ENCODE measurements at regions of chr12 and their contacts with region 1.

Region 1: DNA sequence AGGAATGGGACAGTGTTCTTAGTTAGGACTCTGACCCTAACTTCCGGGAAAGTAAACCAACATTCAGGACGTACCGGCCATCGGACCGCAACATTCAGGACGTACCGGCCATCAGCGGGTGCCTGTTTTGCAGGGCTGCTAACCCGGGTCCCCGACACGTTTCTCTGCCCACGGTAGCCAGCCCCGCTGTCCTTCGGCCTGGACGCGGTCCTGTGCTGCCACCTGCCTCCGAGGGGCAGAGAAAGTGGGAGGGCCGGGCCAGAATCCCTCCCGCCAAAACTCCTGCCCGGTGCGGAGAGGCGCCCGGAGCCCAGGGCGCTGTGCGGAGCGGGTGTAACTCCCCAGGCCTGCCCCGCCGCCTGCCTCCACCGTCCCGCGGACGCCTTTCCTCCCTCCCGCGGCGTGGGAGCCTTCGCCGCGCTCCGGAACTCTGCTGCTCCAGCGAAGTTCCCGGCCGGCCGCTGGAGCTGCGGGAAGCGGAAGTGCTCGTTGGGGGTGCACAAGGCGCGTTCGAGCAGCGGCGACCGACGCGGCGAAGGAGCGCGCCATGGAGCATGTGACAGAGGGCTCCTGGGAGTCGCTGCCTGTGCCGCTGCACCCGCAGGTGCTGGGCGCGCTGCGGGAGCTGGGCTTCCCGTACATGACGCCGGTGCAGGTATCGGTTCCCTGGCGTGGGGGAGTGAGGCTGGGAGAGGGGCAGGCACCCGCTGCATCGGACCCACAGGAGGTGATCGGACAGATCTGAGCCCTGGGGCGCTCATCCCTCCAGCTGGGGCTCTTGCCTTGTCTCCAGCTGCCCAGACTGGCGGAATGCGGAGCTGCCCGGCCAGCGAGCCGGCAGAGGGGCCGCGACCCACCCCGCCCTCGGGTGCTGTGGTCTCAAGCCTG is at the start of gene DDX55:
- DNase-seq: peak; percentile 77 to 87 (median 86)
- ATAC-seq: peak; percentile 96
- H3K4me3 ChIP-seq: peak within 1 kb of the TSS; percentile 99
- H3K4me3 Mint-ChIP-seq: peak within 1 kb of the TSS; percentile 89 to 99 (median 97)
- H3K27ac ChIP-seq: peak within 1 kb of the TSS; percentile 84
- H3K27ac Mint-ChIP-seq: peak within 1 kb of the TSS; percentile 83 to 98 (median 93)
- H3K4me1 ChIP-seq: peaks cover 4 to 8% of the 10 kb centered on the region in 2 donors
- H3K4me1 Mint-ChIP-seq: peaks cover 11 to 47% (median 30%) of the 10 kb centered on the region in 7 donors
- H3K27me3 ChIP-seq: no peaks in the 10 kb centered on the region
- H3K27me3 Mint-ChIP-seq: no peaks in the 10 kb centered on the region
- total RNA-seq, gene DDX55: 26.0 to 54.0 (median 43.4) TPM

Region 2: DNA sequence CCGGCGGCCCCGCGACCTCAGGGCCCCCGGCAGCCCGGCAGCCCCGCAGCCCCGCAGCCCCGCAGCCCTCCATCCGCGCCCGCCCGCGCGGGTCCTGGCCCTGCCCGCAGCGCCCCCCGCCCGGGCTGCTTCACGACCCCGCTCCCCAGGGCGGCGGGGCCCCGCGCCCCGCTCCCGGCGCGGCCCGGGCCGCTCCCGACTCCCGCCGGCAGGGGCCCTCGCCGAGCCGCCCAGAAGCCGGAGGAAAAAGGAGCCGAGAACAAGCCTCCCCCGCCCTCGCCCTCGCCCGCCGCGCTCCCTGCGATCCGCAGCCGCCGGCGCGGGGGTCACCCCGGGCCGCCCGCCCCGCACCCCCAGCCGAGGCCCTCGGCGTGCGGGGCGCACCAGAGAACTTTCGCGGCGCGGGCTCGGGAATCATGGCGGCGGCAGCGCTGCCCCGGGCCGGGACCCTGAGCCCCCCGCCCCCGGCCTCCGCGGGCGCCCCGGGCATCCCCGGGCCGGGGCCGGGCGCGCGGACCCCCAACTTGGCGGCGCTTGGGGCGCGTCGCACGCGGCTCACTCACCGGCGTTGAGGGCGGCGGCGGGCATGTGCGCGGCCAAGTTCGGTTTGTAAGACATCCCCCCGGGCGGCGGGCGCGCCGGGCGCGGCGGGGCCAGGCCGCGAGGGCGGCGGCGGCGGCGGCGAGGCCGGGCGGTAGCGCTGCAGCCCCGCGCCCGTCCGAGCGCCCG is 330.7 kb before region 1 on chr12:
- CTCF ChIA-PET with region 1: no interaction called
- POLR2A ChIA-PET with region 1: interaction called, 5 read pairs
- intact Hi-C with region 1: loop called (anchors 1 kb)
- DNase-seq: peak; percentile 55 to 84 (median 68)
- ATAC-seq: peak; percentile 88
- H3K4me3 ChIP-seq: no peak overlapping the region
- H3K4me3 Mint-ChIP-seq: peak overlapping the region in 1 of 10 donors; percentile 87
- H3K27ac ChIP-seq: no peak overlapping the region
- H3K27ac Mint-ChIP-seq: no peak overlapping the region
- H3K4me1 ChIP-seq: peaks cover 12 to 18% of the 10 kb centered on the region in 2 donors
- H3K4me1 Mint-ChIP-seq: peaks cover 7 to 30% (median 20%) of the 10 kb centered on the region in 7 donors
- H3K27me3 ChIP-seq: no peaks in the 10 kb centered on the region
- H3K27me3 Mint-ChIP-seq: no peaks in the 10 kb centered on the region

Region 3: GRCh38 chr12:123877968-123878367 is 276.1 kb after region 1 on chr12:
- CTCF ChIA-PET with region 1: no interaction called
- POLR2A ChIA-PET with region 1: no interaction called
- intact Hi-C with region 1: no loop called
- DNase-seq: no peak
- ATAC-seq: no peak
- H3K4me3 ChIP-seq: no peak overlapping the region
- H3K4me3 Mint-ChIP-seq: no peak overlapping the region
- H3K27ac ChIP-seq: no peak overlapping the region
- H3K27ac Mint-ChIP-seq: no peak overlapping the region
- H3K4me1 ChIP-seq: no peaks in the 10 kb centered on the region
- H3K4me1 Mint-ChIP-seq: no peaks in the 10 kb centered on the region
- H3K27me3 ChIP-seq: no peaks in the 10 kb centered on the region
- H3K27me3 Mint-ChIP-seq: peaks cover 0 to 18% (median 0%) of the 10 kb centered on the region in 5 donors